Activated CD8-positive, alpha-beta memory T cell treated with anti-CD3 and anti-CD28 coated beads, Interleukin-2, amount 10 ng/mL, durations not matched to agents 7 days and 5 days (primary cell): ENCODE measurements at regions of chr11 and their contacts with region 1.

Region 1: DNA sequence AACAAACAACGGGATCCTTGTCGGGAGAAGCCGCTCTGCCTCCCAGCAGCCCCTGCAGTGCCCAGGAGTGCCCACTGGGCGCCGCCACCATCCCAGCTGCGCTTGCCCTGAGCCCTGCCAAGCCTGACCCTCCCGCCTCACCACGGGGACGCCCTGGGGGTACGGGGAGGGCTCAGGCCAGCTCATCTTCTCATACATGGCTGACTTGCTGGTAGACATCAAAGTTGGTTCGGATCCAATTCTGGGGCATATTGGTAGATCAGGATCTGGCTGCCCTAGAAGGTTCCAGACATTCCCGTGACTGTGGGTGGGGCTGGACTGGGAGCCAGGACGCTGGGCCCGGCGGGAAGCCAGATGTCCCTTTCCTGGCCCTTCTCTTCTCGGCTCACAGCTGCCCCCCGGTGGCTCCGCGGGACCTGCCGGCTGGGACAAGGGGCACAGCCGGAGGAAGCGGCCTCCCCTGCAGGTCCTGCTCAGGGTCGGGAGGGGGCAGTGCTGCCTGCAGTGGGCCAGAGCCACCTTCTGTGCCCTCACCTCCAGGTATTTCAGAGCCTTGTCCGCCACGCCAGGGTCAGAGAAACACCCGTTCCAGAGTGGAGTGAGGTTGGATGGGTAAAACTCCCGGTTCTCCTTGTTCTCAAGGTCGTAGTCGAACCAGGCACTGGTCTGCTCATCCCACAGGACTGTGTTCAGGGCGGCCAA is 10.6 kb upstream of the TREH start:
- DNase-seq: peak; percentile 90
- ATAC-seq: peak; percentile 94
- H3K4me3 Mint-ChIP-seq: peak overlapping the region; percentile 69
- H3K27ac Mint-ChIP-seq: peak overlapping the region; percentile 62
- H3K4me1 Mint-ChIP-seq: peaks cover 44% of the 10 kb centered on the region
- H3K27me3 Mint-ChIP-seq: peaks cover 21% of the 10 kb centered on the region

Region 2: GRCh38 chr11:118615282-118615952 is 74.6 kb before region 1 on chr11:
- CTCF ChIA-PET with region 1: no interaction called
- DNase-seq: no peak
- ATAC-seq: no peak
- H3K4me3 Mint-ChIP-seq: no peak overlapping the region
- H3K27ac Mint-ChIP-seq: no peak overlapping the region
- H3K4me1 Mint-ChIP-seq: peaks cover 7% of the 10 kb centered on the region
- H3K27me3 Mint-ChIP-seq: peaks cover 8% of the 10 kb centered on the region

Region 3: DNA sequence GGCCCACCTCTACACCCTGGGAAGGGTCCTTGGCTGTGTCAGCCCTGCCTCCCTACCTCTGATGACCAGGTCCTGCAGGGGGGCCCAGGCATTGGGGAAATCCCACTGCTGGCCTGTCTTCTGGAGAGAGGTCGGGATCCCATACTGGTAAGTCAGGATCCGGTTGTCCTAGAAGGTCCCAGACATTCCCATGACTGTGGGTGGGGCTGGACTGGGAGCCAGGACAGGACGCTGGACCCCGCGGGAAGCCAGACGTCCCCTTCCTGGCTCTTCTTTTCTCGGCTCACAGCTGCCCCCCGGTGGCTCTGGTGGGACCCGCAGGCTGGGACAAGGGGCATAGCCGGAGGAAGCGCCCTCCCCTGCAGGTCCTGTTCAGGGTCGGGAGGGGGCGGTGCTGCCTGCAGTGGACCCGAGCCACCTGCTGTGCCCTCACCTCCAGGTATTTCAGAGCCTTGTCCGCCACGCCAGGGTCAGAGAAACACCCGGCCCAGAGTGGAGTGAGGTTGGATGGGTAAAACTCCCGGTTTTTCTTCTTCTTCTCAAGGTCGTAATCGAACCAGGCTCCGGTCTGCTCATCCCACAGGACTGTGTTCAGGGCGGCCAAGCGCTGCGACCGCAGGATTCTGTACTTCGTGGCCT is 30.6 kb before region 1 on chr11:
- CTCF ChIA-PET with region 1: interaction called, 10 read pairs
- DNase-seq: peak; percentile 94
- ATAC-seq: peak; percentile 97
- H3K4me3 Mint-ChIP-seq: no peak overlapping the region
- H3K27ac Mint-ChIP-seq: no peak overlapping the region
- H3K4me1 Mint-ChIP-seq: no peaks in the 10 kb centered on the region
- H3K27me3 Mint-ChIP-seq: no peaks in the 10 kb centered on the region

Region 4: DNA sequence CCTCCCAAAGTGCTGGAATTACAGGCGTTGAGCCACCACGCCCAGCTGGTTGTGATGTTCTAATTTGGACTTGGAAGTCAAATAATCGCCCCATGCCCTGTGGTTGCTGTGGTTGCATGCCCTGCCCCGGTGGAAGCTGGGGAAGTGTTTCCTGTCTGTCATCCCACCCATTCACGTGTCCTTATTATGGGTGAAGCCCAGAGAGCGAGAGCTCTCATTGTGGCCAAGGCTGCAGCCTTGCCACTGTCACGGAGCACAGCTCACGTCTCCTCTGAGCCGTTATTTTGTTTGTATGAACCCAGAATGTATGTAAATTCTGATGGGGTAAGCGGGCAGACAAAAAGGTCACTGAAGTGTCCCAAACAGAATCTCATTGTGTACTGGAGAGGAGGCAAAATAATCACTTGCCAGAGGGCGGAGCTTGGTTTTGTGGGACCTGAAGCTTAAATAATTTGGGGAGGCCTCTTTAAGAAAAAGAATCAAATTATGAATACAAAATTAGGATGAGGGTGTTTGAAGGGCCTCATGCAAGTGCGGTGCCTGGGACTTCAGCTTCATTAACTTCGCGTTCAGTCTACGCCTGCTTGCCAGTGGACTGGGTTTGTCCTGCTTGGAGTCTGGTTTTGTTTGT is 15.2 kb after region 1 on chr11:
- CTCF ChIA-PET with region 1: interaction called, 33 read pairs
- DNase-seq: peak; percentile 62
- ATAC-seq: peak; percentile 75
- H3K4me3 Mint-ChIP-seq: no peak overlapping the region
- H3K27ac Mint-ChIP-seq: no peak overlapping the region
- H3K4me1 Mint-ChIP-seq: peaks cover 15% of the 10 kb centered on the region
- H3K27me3 Mint-ChIP-seq: peaks cover 2% of the 10 kb centered on the region

Region 5: GRCh38 chr11:118791111-118791965 is 101.3 kb after region 1 on chr11 and contains the start of gene DDX6:
- CTCF ChIA-PET with region 1: interaction called, 30 read pairs
- DNase-seq: peak; percentile 93
- ATAC-seq: peak; percentile 59
- H3K4me3 Mint-ChIP-seq: peak within 1 kb of the TSS; percentile 99
- H3K27ac Mint-ChIP-seq: peak within 1 kb of the TSS; percentile 100
- H3K4me1 Mint-ChIP-seq: peaks cover 24% of the 10 kb centered on the region
- H3K27me3 Mint-ChIP-seq: no peaks in the 10 kb centered on the region
- total RNA-seq, gene DDX6: 127 to 153 TPM

Region 6: DNA sequence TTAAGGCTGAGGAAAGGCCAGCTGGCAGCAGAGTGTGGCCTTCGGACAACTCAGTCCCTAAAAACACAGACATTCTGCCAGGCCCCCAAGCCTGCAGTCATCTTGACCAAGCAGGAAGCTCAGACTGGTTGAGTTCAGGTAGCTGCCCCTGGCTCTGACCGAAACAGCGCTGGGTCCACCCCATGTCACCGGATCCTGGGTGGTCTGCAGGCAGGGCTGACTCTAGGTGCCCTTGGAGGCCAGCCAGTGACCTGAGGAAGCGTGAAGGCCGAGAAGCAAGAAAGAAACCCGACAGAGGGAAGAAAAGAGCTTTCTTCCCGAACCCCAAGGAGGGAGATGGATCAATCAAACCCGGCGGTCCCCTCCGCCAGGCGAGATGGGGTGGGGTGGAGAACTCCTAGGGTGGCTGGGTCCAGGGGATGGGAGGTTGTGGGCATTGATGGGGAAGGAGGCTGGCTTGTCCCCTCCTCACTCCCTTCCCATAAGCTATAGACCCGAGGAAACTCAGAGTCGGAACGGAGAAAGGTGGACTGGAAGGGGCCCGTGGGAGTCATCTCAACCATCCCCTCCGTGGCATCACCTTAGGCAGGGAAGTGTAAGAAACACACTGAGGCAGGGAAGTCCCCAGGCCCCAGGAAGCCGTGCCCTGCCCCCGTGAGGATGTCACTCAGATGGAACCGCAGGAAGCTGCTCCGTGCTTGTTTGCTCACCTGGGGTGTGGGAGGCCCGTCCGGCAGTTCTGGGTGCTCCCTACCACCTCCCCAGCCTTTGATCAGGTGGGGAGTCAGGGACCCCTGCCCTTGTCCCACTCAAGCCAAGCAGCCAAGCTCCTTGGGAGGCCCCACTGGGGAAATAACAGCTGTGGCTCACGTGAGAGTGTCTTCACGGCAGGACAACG is 205.4 kb after region 1 on chr11:
- CTCF ChIA-PET with region 1: interaction called, 10 read pairs
- DNase-seq: peak; percentile 68
- ATAC-seq: peak; percentile 60
- H3K4me3 Mint-ChIP-seq: no peak overlapping the region
- H3K27ac Mint-ChIP-seq: peak overlapping the region; percentile 73
- H3K4me1 Mint-ChIP-seq: peaks cover 41% of the 10 kb centered on the region
- H3K27me3 Mint-ChIP-seq: no peaks in the 10 kb centered on the region

Region 7: GRCh38 chr11:118928108-118928870 is 238.3 kb after region 1 on chr11:
- CTCF ChIA-PET with region 1: interaction called, 32 read pairs
- DNase-seq: peak; percentile 94
- ATAC-seq: peak; percentile 60
- H3K4me3 Mint-ChIP-seq: peak overlapping the region; percentile 92
- H3K27ac Mint-ChIP-seq: peak overlapping the region; percentile 98
- H3K4me1 Mint-ChIP-seq: peaks cover 44% of the 10 kb centered on the region
- H3K27me3 Mint-ChIP-seq: no peaks in the 10 kb centered on the region

Region 8: GRCh38 chr11:118956094-118956846 is 266.3 kb after region 1 on chr11 and contains the start of gene UPK2:
- CTCF ChIA-PET with region 1: interaction called, 52 read pairs
- DNase-seq: peak; percentile 90
- ATAC-seq: peak; percentile 100
- H3K4me3 Mint-ChIP-seq: no peak within 1 kb of the TSS
- H3K27ac Mint-ChIP-seq: no peak within 1 kb of the TSS
- H3K4me1 Mint-ChIP-seq: no peaks in the 10 kb centered on the region
- H3K27me3 Mint-ChIP-seq: peaks cover 2% of the 10 kb centered on the region
- total RNA-seq, gene UPK2: not detected